Activated CD4-positive, alpha-beta memory T cell treated with anti-CD3 and anti-CD28 coated beads for 36 hours (primary cell): ENCODE measurements at regions of chr4 and their contacts with region 1.

Region 1: DNA sequence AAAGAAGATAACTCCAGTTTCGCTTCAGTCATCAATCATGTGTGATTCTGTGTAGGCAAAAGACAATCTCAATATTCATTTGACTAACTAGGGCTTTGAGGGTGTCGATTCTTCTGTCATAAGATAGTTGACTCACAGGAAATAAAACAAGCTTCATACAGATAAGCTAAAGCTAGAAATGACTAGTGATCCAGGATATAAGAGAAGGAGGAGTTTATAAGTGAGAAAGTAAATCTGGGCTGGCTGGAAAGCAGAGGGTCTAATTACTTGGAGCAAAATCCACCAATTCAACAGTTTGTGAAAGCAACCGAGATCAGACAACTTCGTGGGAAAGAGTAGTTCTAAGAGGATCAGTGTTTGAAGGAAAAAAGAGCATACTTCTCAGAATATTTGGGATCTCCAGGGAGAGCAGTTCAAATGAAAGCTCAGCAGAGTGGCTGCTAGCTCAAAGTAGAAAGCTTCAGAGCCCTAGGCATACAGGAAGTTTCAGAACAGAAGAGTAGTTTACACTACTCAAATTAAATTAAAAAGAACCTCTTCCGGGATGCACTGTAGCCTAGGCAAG is 429.3 kb downstream of the INPP4B start:
- DNase-seq: no peak
- H3K4me3 Mint-ChIP-seq: peak overlapping the region; percentile 72
- H3K27ac Mint-ChIP-seq: peak overlapping the region; percentile 92
- H3K4me1 Mint-ChIP-seq: peaks cover 67% of the 10 kb centered on the region
- H3K27me3 Mint-ChIP-seq: no peaks in the 10 kb centered on the region

Region 2: DNA sequence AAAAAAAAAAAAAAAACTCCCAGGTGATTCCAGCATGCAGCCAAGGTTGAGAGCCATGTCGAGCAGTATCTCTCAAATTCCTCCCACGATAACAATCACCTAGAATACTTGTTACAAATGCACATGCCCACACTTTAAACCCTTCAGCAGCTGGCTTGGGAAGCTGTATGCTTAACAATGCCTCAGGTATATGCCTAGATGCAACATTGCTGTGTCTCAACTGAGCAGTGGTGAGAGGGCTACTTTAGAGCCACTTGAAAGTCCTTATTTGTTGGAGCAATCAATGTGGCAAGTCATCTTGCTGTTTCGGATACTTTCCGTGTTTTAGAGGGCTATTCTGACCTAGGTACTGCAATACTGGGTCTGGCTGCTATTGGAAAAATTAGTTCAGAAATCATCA is 58.1 kb before region 1 on chr4:
- CTCF ChIA-PET with region 1: interaction called, 3 read pairs
- POLR2A ChIA-PET with region 1: interaction called, 6 read pairs
- intact Hi-C with region 1: loop called (anchors 1 kb)
- DNase-seq: no peak
- H3K4me3 Mint-ChIP-seq: peak overlapping the region; percentile 14
- H3K27ac Mint-ChIP-seq: peak overlapping the region; percentile 79
- H3K4me1 Mint-ChIP-seq: peaks cover 87% of the 10 kb centered on the region
- H3K27me3 Mint-ChIP-seq: no peaks in the 10 kb centered on the region

Region 3: GRCh38 chr4:142396279-142396678 is 20.5 kb before region 1 on chr4:
- CTCF ChIA-PET with region 1: no interaction called
- POLR2A ChIA-PET with region 1: interaction called, 7 read pairs
- intact Hi-C with region 1: loop called (anchors 1 kb)
- DNase-seq: no peak
- H3K4me3 Mint-ChIP-seq: peak overlapping the region; percentile 74
- H3K27ac Mint-ChIP-seq: peak overlapping the region; percentile 90
- H3K4me1 Mint-ChIP-seq: peaks cover 74% of the 10 kb centered on the region
- H3K27me3 Mint-ChIP-seq: no peaks in the 10 kb centered on the region

Region 4: DNA sequence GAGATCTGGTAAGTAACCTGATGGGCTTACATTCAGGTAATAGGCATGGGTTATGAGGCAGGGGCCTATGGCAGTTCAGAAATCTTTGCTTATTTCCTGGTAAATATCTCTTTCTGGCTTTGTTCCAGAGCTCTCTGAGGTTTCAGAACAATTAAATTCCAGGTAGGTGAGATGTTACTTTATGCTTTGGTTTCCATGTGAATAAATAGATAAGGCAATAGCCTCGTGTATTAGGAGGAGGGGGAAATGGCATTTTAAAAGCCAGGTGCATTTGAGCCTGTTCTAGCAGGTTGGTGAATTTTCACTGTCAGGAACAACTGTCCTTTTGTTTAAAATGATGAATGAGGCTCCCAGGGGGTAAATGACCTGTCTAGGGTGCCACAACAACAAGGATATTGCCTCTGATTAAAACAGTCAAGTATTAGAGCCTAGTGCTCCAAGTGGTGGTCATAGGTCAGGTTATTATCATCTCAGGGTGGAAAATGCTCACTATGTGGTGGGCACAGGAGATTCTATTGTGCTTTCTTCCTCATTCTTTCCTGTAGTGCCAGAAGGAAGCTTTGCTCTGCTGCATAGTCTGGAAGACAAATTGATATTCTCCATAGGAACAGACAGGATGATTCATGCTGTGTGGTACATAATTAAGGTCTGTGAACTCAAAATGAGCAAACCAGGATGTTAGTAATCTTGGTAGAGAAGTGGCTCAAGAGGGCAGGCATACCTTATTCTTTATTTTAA is 133.1 kb after region 1 on chr4:
- CTCF ChIA-PET with region 1: no interaction called
- POLR2A ChIA-PET with region 1: interaction called, 4 read pairs
- intact Hi-C with region 1: loop called (anchors 1 kb)
- DNase-seq: no peak
- H3K4me3 Mint-ChIP-seq: no peak overlapping the region
- H3K27ac Mint-ChIP-seq: peak overlapping the region; percentile 51
- H3K4me1 Mint-ChIP-seq: peaks cover 72% of the 10 kb centered on the region
- H3K27me3 Mint-ChIP-seq: no peaks in the 10 kb centered on the region

Region 5: GRCh38 chr4:142817442-142817841 is 400.6 kb after region 1 on chr4:
- CTCF ChIA-PET with region 1: no interaction called
- POLR2A ChIA-PET with region 1: no interaction called
- intact Hi-C with region 1: loop called (anchors 1 kb)
- DNase-seq: peak; percentile 70
- H3K4me3 Mint-ChIP-seq: no peak overlapping the region
- H3K27ac Mint-ChIP-seq: peak overlapping the region; percentile 4
- H3K4me1 Mint-ChIP-seq: peaks cover 20% of the 10 kb centered on the region
- H3K27me3 Mint-ChIP-seq: peaks cover 5% of the 10 kb centered on the region